A673 (cell line): ENCODE measurements at regions of chr11 and their contacts with region 1.

Region 1: GRCh38 chr11:41309716-41310115 is 149.7 kb downstream of the LRRC4C start:
- DNase-seq: no peak
- H3K4me3 ChIP-seq: no peak overlapping the region
- H3K27ac ChIP-seq: no peak overlapping the region
- H3K4me1 ChIP-seq: no peaks in the 10 kb centered on the region
- H3K27me3 ChIP-seq: no peaks in the 10 kb centered on the region
- CTCF ChIP-seq: peak; percentile 53

Region 2: DNA sequence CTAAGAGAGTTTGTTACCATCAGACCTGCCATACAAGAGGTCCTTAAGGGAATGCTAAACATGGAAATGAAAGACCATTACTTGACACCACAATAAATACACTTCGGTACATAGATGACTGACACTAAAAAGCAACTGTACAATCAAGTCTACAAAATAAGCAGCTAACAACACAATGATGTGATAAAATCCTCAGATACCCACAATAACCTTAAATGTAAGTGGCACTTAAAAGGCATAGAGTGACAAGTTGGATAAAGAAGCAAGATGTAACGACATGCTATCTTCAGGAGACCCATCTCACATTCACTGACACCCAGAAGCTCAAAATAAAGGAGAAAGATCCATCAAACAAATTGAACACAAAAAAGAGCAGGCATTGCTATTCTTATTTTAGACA is 42.1 kb after region 1 on chr11:
- CTCF ChIA-PET with region 1: no interaction called
- POLR2A ChIA-PET with region 1: no interaction called
- intact Hi-C with region 1: loop called (anchors 5 kb)
- DNase-seq: no peak
- H3K4me3 ChIP-seq: no peak overlapping the region
- H3K27ac ChIP-seq: no peak overlapping the region
- H3K4me1 ChIP-seq: no peaks in the 10 kb centered on the region
- H3K27me3 ChIP-seq: no peaks in the 10 kb centered on the region
- CTCF ChIP-seq: no peak